ENCODE measurements at regions of chr6 and their contacts with region 1.

Region 1: DNA sequence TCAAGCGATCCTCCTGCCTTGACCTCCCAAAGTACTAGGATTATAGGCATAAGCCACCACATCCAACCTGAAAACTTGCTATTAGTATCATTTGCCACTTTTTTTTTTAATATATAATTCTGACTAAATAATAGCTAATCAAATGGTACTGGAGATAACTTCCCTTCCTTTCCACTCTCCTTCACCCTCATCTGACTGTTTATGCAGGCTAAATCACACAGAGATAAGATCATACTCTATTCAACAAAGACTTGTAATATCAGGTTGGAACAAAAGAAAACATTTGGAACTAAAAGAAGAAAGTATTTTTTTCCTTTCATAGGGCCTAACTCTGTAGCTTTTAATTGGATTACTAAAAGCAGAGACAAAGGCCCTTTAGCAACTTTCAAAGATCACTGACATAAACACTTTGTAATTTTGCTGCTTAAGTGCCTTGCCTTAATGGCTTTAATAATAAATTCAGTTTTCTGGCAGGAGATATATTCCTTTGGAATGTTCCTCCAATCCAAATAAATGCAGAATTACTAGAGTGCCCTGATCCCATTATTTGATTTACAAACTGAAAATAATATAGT is 198.7 kb upstream of the ASCC3 start:
- DNase-seq: no peak
- ATAC-seq: no peak
- H3K4me3 ChIP-seq: no peak overlapping the region
- H3K27ac ChIP-seq: no peak overlapping the region
- H3K4me1 ChIP-seq: no peaks in the 10 kb centered on the region
- H3K27me3 ChIP-seq: no peaks in the 10 kb centered on the region

Region 2: GRCh38 chr6:100998111-100998510 is 81.7 kb before region 1 on chr6:
- intact Hi-C with region 1: loop called in 1 of 2 experiments (anchors 5 kb)
- DNase-seq: no peak
- ATAC-seq: no peak
- H3K4me3 ChIP-seq: no peak overlapping the region
- H3K27ac ChIP-seq: no peak overlapping the region
- H3K4me1 ChIP-seq: peaks cover 2 to 9% of the 10 kb centered on the region in 2 donors
- H3K27me3 ChIP-seq: no peaks in the 10 kb centered on the region